HepG2 (cell line): ENCODE measurements at regions of chr4 and their contacts with region 1.

Region 1: GRCh38 chr4:139656614-139657486 is 8.8 kb upstream of the MGST2 start:
- DNase-seq: peak; percentile 76
- ATAC-seq: peak; percentile 82
- H3K4me3 ChIP-seq: peak overlapping the region; percentile 4 to 58 (median 20); a peak in 2 of 6 replicates
- H3K27ac ChIP-seq: peak overlapping the region; percentile 81
- H3K4me1 ChIP-seq: peaks cover 73% of the 10 kb centered on the region
- H3K27me3 ChIP-seq: no peaks in the 10 kb centered on the region
- CTCF ChIP-seq: peak; percentile 79
- EP300 ChIP-seq: no peak
- POLR2A ChIP-seq: no peak
- RAD21 ChIP-seq: no peak; the same call in none of the 2 replicates

Region 2: DNA sequence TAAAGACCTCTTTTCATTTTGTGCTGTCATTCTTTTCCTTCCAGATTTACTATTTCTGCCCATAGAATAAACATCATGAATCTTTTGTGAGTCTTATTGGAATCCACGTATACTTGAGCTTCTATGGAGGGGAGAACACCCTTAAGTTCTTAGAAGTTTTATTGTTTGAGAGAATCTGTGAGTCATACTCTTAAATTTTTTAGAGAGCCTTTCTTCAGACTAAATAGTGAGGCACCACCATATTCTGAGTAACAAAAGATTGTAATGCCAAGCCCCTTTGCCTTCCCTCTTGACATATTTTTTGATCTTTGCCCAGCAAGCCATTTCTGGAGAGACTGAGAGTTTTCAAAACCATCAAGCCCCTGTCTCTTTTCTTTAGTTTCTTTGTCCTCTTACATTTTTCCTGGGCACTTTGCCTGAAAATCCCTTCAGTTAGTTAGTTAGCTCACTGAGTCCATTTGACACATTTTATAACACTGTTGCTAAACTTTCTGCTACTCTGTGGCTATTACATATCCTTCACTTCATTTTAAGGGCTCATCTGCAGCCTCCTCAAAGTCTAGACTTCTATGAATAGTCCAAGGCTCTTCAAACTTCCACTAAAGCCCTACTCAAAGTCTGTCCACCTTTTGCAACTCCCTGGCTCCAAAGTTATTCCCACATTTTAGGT is 289.3 kb before region 1 on chr4:
- CTCF ChIA-PET with region 1: no interaction called
- POLR2A ChIA-PET with region 1: no interaction called
- in situ Hi-C with region 1: no loop called
- intact Hi-C with region 1: no loop called
- DNase-seq: no peak
- ATAC-seq: no peak
- H3K4me3 ChIP-seq: no peak overlapping the region
- H3K27ac ChIP-seq: no peak overlapping the region
- H3K4me1 ChIP-seq: no peaks in the 10 kb centered on the region
- H3K27me3 ChIP-seq: no peaks in the 10 kb centered on the region
- CTCF ChIP-seq: no peak
- EP300 ChIP-seq: no peak
- POLR2A ChIP-seq: no peak
- RAD21 ChIP-seq: no peak

Region 3: GRCh38 chr4:139704915-139705485 is 48.1 kb after region 1 on chr4:
- CTCF ChIA-PET with region 1: interaction called, 29 read pairs
- POLR2A ChIA-PET with region 1: interaction called, 3 read pairs
- in situ Hi-C with region 1: no loop called
- intact Hi-C with region 1: loop called (anchors 1 kb)
- DNase-seq: peak; percentile 44
- ATAC-seq: peak; percentile 65
- H3K4me3 ChIP-seq: no peak overlapping the region
- H3K27ac ChIP-seq: peak overlapping the region; percentile 11
- H3K4me1 ChIP-seq: no peaks in the 10 kb centered on the region
- H3K27me3 ChIP-seq: no peaks in the 10 kb centered on the region
- CTCF ChIP-seq: peak; percentile 32; the same call in 1 of the 2 replicates
- EP300 ChIP-seq: no peak
- POLR2A ChIP-seq: no peak
- RAD21 ChIP-seq: no peak

Region 4: GRCh38 chr4:139761461-139761860 is 104.6 kb after region 1 on chr4:
- CTCF ChIA-PET with region 1: interaction called, 3 read pairs
- POLR2A ChIA-PET with region 1: no interaction called
- in situ Hi-C with region 1: no loop called
- intact Hi-C with region 1: loop called (anchors 2 kb)
- DNase-seq: peak; percentile 82
- ATAC-seq: peak; percentile 99
- H3K4me3 ChIP-seq: no peak overlapping the region
- H3K27ac ChIP-seq: no peak overlapping the region
- H3K4me1 ChIP-seq: peaks cover 33% of the 10 kb centered on the region
- H3K27me3 ChIP-seq: peaks cover 0 to 4% of the 10 kb centered on the region in 2 experiments; a peak in 2 of 5 replicates
- CTCF ChIP-seq: peak; percentile 72
- EP300 ChIP-seq: no peak
- POLR2A ChIP-seq: no peak
- RAD21 ChIP-seq: peak; percentile 43; the same call in 1 of the 2 replicates

Region 5: GRCh38 chr4:140252742-140253555 is 596.1 kb after region 1 on chr4:
- CTCF ChIA-PET with region 1: no interaction called
- POLR2A ChIA-PET with region 1: no interaction called
- in situ Hi-C with region 1: loop called (anchors 5 kb)
- intact Hi-C with region 1: loop called (anchors 1 kb)
- DNase-seq: no peak
- ATAC-seq: peak; percentile 90
- H3K4me3 ChIP-seq: peak overlapping the region; percentile 38 to 67 (median 50); a peak in 5 of 6 replicates
- H3K27ac ChIP-seq: no peak overlapping the region
- H3K4me1 ChIP-seq: peaks cover 43% of the 10 kb centered on the region
- H3K27me3 ChIP-seq: peaks cover 2 to 8% of the 10 kb centered on the region in 2 experiments; a peak in 2 of 5 replicates
- CTCF ChIP-seq: peak; percentile 76
- EP300 ChIP-seq: no peak
- POLR2A ChIP-seq: no peak
- RAD21 ChIP-seq: peak; percentile 66